GM10248 (cell line): ENCODE measurements at regions of chr5 and their contacts with region 1.

Region 1: DNA sequence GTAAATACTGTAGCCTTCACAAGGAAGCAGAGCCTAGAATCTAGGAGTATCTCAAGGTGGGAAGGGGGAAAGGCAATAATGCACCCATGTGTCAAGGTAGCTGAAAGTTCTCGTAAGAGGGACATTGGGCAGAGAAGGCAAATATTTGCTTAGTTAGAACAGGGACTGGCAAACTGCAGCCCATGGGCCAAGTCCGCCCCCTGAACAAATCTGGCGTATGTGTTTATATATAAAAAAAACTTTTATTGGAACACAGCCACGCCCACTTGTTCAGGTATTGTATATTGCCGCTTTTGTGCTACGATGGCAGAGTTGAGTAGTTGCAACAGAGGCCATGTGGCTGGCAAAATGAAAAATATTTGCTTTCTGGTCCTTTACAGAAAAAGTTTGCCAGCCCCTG is 16.1 kb downstream of the KCNN2 start:
- DNase-seq: no peak
- CTCF ChIP-seq: no peak

Region 2: GRCh38 chr5:114355086-114355830 is 22.7 kb before region 1 on chr5:
- CTCF ChIA-PET with region 1: no interaction called
- POLR2A ChIA-PET with region 1: no interaction called
- DNase-seq: no peak
- CTCF ChIP-seq: no peak

Region 3: DNA sequence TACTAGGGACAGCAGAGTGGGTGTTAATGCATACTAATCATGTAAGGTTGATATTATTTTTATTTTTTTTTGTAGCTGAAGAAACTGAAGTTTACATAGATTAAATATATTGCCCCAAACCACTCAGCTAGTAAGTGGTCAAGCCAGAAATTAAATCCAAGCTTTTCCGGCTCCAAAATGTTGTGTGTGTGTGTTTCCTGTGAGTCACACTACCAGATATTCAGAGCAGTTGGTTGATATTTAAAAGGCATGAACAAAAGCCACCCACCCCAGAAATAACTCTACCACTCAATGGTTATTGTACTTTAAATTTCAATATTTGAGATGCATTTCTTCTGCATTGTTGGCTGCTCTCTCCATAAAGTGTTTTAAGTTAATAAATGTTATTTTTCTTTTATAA is 13.4 kb after region 1 on chr5:
- CTCF ChIA-PET with region 1: interaction called, 12 read pairs
- POLR2A ChIA-PET with region 1: no interaction called
- DNase-seq: no peak
- CTCF ChIP-seq: no peak

Region 4: GRCh38 chr5:114402206-114402605 is 24.3 kb after region 1 on chr5:
- CTCF ChIA-PET with region 1: no interaction called
- POLR2A ChIA-PET with region 1: no interaction called
- DNase-seq: no peak
- CTCF ChIP-seq: no peak

Region 5: GRCh38 chr5:114418176-114419066 is 40.5 kb after region 1 on chr5:
- CTCF ChIA-PET with region 1: no interaction called
- POLR2A ChIA-PET with region 1: no interaction called
- DNase-seq: peak; percentile 21
- CTCF ChIP-seq: no peak